WTC11 (cell line): ENCODE measurements at regions of chr5 and their contacts with region 1.

Region 1: DNA sequence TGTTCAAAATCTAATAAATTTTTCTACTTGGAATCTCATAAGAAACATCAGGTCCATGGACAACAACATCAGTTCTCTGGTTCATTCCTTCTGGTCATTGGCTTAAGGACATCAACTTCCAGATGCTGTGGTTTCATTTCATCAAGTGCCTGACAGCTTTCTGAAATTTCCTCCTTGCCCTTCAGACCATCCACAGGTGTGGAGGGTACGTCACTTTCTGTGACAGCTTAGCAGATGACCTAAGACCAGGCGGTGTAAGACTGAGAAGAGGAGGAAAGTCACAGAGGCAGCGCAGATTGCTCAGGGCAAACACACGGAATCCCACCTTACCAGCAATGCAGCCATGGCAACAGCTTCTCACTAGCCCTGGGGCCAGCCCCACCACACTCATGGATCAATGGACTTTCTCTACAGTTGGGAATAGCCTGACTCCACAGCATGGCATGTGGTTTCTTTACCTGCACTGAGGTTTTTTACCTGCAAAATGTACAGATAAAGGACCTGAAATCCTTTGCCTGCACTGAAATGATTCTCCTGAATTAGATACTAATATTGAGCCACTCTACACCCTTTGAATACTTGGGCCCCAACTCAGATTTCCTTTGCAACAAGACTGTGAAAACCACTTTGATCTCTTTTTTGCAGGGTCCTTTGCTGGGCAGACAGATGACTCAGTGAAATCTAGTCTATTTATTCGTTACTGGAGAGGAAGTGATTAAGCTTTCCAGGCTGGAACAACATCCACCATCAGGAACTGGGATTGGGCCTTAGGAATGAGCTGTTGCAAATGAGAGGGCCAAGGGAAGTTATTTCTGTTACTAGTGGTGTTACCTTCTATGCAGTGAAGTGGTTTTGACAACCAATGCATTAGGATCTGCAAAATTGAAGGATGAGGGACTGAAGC is 26.9 kb downstream of the TICAM2 start:
- DNase-seq: no peak
- ATAC-seq: no peak
- H3K4me3 Mint-ChIP-seq: no peak overlapping the region
- H3K27ac Mint-ChIP-seq: no peak overlapping the region
- H3K4me1 Mint-ChIP-seq: peaks cover 13% of the 10 kb centered on the region
- H3K27me3 Mint-ChIP-seq: no peaks in the 10 kb centered on the region
- CTCF ChIP-seq: no peak

Region 2: GRCh38 chr5:115309751-115310370 is 265.6 kb before region 1 on chr5:
- CTCF ChIA-PET with region 1: interaction called, 73 read pairs
- POLR2A ChIA-PET with region 1: interaction called, 3 read pairs
- DNase-seq: no peak
- ATAC-seq: peak; percentile 43; the same call in 1 of the 2 replicates
- H3K4me3 Mint-ChIP-seq: no peak overlapping the region
- H3K27ac Mint-ChIP-seq: no peak overlapping the region
- H3K4me1 Mint-ChIP-seq: peaks cover 19% of the 10 kb centered on the region
- H3K27me3 Mint-ChIP-seq: no peaks in the 10 kb centered on the region
- CTCF ChIP-seq: no peak; the same call in 1 of the 2 replicates

Region 3: GRCh38 chr5:115522832-115523403 is 52.5 kb before region 1 on chr5:
- CTCF ChIA-PET with region 1: interaction called, 12 read pairs
- POLR2A ChIA-PET with region 1: no interaction called
- DNase-seq: no peak
- ATAC-seq: no peak
- H3K4me3 Mint-ChIP-seq: no peak overlapping the region
- H3K27ac Mint-ChIP-seq: peak overlapping the region; percentile 54; the same call in 1 of the 2 replicates
- H3K4me1 Mint-ChIP-seq: peaks cover 26% of the 10 kb centered on the region
- H3K27me3 Mint-ChIP-seq: no peaks in the 10 kb centered on the region
- CTCF ChIP-seq: no peak

Region 4: GRCh38 chr5:115551415-115551814 is 24.0 kb before region 1 on chr5:
- CTCF ChIA-PET with region 1: interaction called, 14 read pairs
- POLR2A ChIA-PET with region 1: no interaction called
- DNase-seq: no peak
- ATAC-seq: no peak
- H3K4me3 Mint-ChIP-seq: no peak overlapping the region
- H3K27ac Mint-ChIP-seq: no peak overlapping the region
- H3K4me1 Mint-ChIP-seq: peaks cover 24% of the 10 kb centered on the region
- H3K27me3 Mint-ChIP-seq: peaks cover 2% of the 10 kb centered on the region; the same call in 1 of the 2 replicates
- CTCF ChIP-seq: no peak

Region 5: DNA sequence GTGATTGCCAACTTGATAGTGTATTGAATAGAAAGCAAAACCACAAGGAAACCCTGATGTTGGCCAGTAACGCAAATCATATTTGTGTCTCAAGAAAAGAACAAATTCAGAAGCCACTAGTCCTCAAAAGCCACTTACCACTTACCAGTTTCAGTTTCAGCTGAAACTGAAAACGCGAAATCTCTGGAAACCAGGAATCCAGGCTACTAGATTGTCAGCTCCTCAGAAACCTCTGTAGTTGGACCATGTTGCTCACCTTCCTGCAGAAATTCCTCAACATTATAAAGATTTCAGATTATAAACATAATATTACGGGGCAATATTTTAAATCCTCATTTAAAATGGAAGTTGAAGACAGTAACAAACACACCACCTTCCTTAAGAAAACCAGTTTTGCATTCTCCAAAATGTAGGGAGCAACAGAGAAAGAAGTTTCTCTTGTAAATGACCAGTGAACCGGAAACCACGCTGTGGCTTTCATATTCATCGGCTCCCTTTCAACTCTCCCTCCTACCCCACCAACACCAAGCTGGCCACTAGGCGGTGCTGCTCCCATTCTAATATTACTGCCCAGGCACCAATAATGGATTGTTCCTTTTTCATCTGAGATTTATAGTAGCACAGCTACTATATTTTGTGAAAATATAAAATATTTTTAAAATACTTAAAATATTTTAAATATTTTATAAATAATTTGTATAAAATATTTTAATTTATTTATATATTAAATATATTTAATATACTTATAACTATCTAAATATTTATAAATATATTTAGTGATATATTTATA is 59.1 kb after region 1 on chr5:
- CTCF ChIA-PET with region 1: interaction called, 10 read pairs
- POLR2A ChIA-PET with region 1: no interaction called
- DNase-seq: peak; percentile 92
- ATAC-seq: peak; percentile 84
- H3K4me3 Mint-ChIP-seq: peak overlapping the region; percentile 66
- H3K27ac Mint-ChIP-seq: peak overlapping the region; percentile 96
- H3K4me1 Mint-ChIP-seq: peaks cover 56% of the 10 kb centered on the region
- H3K27me3 Mint-ChIP-seq: no peaks in the 10 kb centered on the region
- CTCF ChIP-seq: peak; percentile 80

Region 6: GRCh38 chr5:115695310-115695880 is 120.0 kb after region 1 on chr5:
- CTCF ChIA-PET with region 1: no interaction called
- POLR2A ChIA-PET with region 1: no interaction called
- DNase-seq: no peak
- ATAC-seq: no peak
- H3K4me3 Mint-ChIP-seq: no peak overlapping the region
- H3K27ac Mint-ChIP-seq: no peak overlapping the region
- H3K4me1 Mint-ChIP-seq: peaks cover 4% of the 10 kb centered on the region
- H3K27me3 Mint-ChIP-seq: no peaks in the 10 kb centered on the region
- CTCF ChIP-seq: no peak

Region 7: GRCh38 chr5:115795697-115796096 is 220.3 kb after region 1 on chr5:
- CTCF ChIA-PET with region 1: no interaction called
- POLR2A ChIA-PET with region 1: no interaction called
- DNase-seq: no peak
- ATAC-seq: peak; percentile 48; the same call in 1 of the 2 replicates
- H3K4me3 Mint-ChIP-seq: no peak overlapping the region
- H3K27ac Mint-ChIP-seq: no peak overlapping the region
- H3K4me1 Mint-ChIP-seq: no peaks in the 10 kb centered on the region
- H3K27me3 Mint-ChIP-seq: no peaks in the 10 kb centered on the region
- CTCF ChIP-seq: no peak